ENCODE measurements at regions of chr16 and their contacts with region 1.

Region 1: DNA sequence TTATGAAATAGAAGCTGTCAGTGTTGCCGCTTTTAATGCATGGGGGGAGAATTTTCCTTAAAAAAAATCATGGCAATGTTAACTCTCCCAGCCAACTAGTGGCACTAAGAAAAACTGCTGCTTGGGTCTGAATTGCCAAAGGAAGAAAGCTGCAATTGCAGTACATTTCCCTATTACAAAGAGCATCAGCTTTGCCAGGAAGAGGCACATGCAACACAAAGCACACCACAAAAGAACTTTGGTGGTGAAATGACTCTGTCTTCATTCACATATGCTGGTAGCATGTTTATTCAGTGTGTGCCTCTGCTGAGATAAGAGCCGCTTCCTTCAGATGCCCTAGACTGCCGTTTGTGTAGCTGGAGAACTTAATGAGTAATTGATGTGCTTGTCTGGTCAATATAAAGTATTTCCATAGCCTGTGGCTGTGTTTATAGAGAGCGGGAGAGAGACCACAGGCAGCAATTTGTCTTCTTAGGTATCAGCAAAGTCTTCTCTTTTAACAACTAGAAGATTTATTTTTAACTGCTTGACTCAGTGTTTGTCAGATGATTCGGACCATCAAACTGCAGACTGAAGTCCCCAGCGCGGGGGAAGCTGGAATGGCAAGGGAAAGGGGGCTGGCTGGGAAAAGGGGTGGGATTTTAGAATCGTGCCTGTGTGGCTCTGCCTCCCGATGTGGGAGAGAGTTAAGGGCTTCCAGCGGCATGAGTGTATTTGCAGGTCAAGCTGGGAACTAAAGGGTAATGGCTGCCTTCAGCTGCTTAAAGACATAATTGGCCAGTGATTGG is 115.1 kb downstream of the MRTFB start:
- DNase-seq: no peak
- H3K4me3 ChIP-seq: peak overlapping the region; percentile 16
- H3K27me3 ChIP-seq: no peaks in the 10 kb centered on the region
- CTCF ChIP-seq: peak; percentile 66

Region 2: DNA sequence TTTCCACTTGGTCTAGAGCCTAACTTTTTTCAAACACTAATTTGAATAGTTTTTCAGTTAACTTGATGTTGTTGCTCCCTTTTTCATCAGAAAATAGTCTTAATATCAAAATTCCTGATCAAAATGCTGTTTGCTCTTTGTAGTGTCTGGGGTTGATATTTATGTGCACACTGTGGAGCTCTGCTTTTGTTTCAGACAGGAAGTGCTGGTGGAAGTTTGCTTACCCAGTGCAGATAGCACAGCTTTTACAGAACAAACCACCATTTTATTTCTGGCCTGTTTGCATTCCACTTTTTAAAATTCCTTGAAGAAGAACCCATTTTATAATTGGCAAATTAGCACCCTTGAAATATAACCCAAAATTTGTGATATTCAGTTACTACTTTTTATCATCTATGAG is 10.3 kb after region 1 on chr16:
- CTCF ChIA-PET with region 1: interaction called, 18 read pairs
- POLR2A ChIA-PET with region 1: no interaction called
- DNase-seq: no peak
- H3K4me3 ChIP-seq: no peak overlapping the region
- H3K27me3 ChIP-seq: no peaks in the 10 kb centered on the region
- CTCF ChIP-seq: no peak

Region 3: DNA sequence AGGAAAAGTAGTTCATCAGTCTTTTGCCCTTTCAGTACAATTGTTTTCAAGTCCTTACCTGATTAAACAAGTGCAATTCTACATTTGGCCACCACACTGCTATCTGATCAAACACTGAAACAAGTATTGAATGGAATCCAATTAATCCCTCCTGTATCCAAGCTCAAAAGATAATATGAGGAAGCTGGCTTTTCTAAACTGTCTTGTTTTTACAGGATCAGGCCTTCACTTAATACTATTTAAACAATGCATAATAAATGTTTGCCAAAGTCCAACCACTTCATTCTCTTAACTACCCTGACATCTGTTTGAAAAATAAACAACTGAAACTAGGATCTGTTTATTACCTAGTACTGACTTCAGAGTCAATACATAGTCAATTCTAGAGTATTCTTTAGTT is 16.5 kb after region 1 on chr16:
- CTCF ChIA-PET with region 1: interaction called, 18 read pairs
- POLR2A ChIA-PET with region 1: interaction called, 3 read pairs
- DNase-seq: no peak
- H3K4me3 ChIP-seq: no peak overlapping the region
- H3K27me3 ChIP-seq: no peaks in the 10 kb centered on the region
- CTCF ChIP-seq: peak; percentile 29